ENCODE measurements at regions of chr14 and their contacts with region 1.

Region 1: DNA sequence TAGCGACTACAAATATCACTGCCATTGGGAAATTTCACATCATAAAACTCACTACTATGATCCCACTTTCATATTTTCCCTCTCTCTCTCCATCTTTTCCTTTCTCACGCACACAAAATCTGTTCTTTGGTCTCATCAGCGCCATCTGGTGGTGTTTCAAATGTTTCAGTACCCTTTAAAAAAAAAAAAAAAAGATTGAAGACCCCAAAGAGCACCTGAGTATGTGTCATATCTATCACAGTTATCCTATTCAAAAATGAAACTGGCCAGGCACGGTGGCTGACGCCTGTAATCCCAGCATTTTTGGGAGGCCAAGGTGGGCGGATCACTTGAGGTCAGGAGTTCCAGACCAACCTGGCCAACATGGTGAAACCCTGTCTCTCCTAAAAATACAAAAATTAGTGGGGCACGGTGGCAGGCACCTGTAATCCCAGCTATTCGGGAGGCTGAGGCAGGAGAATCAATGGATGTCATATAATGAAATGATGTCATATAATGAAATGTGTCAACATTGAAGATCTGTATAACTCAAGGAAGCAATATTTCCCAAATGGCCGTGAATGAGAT is 72.4 kb downstream of the TTC9 start:
- DNase-seq: peak; percentile 44
- ATAC-seq: peak; percentile 18
- H3K4me3 Mint-ChIP-seq: no peak overlapping the region
- H3K27ac Mint-ChIP-seq: no peak overlapping the region
- H3K4me1 Mint-ChIP-seq: peaks cover 47% of the 10 kb centered on the region
- H3K27me3 Mint-ChIP-seq: no peaks in the 10 kb centered on the region
- CTCF ChIP-seq: peak; percentile 38

Region 2: GRCh38 chr14:70616646-70617045 is 97.5 kb before region 1 on chr14:
- CTCF ChIA-PET with region 1: interaction called, 16 read pairs
- POLR2A ChIA-PET with region 1: no interaction called
- DNase-seq: no peak
- ATAC-seq: no peak
- H3K4me3 Mint-ChIP-seq: no peak overlapping the region
- H3K27ac Mint-ChIP-seq: no peak overlapping the region
- H3K4me1 Mint-ChIP-seq: no peaks in the 10 kb centered on the region
- H3K27me3 Mint-ChIP-seq: no peaks in the 10 kb centered on the region
- CTCF ChIP-seq: no peak

Region 3: DNA sequence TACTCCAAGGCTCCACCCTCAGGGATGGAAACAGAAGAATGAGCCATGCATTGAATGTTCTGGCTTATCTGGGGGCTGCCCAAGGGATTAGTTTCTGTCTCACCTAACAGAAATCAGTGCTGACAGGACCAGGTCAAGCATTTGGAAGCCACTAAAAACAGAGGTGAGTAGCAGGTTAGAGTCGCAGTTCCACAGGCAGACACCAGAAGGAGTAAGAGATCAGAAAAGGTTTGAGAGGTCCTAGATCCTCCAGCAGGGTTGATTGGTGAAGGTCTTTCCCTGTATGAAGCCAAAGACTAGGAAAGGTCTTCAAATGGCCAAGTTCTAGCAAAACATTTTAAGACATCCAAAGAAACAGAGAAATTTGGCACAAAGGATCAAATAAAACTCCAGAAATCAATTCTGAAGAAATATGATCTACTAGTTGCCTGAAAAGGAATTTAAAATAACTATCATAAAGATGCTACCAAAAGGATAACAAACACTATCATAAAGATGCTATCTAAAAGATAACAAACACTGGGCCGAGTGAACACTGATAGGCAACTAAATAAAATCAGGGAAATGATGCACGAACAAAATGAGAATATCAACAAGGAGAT is 91.9 kb before region 1 on chr14:
- CTCF ChIA-PET with region 1: interaction called, 16 read pairs
- POLR2A ChIA-PET with region 1: no interaction called
- DNase-seq: peak; percentile 66
- ATAC-seq: peak; percentile 100
- H3K4me3 Mint-ChIP-seq: no peak overlapping the region
- H3K27ac Mint-ChIP-seq: no peak overlapping the region
- H3K4me1 Mint-ChIP-seq: no peaks in the 10 kb centered on the region
- H3K27me3 Mint-ChIP-seq: no peaks in the 10 kb centered on the region
- CTCF ChIP-seq: peak; percentile 46; the same call in 1 of the 2 replicates

Region 4: DNA sequence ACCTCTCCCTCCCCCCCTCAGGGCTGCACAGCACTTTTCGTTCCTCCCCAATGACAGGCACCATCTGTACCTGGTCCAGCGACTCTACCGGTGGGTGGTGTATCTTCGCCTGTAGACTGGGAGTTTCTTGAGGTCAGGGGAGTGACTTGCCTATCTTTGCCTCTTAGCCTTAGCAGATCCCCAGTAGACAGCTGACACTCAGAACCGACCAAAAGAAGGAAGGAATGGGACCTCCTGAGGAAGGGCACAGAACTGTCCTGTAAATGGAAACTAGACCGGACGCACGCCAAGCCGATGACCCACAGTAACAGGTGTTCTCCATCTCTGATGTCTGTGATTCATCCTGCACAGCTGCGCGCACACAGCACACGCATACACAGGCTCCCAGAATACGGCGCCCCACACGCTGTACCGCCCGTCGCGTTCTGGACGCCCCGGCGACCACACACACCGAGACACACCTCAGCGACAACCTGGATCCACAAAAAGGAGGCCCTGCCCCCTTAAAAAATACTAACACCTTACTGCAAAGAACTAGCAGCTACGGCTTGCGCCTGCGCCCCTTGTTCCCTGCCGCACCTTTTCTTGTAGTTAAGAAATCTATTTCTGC is 73.1 kb before region 1 on chr14:
- CTCF ChIA-PET with region 1: interaction called, 18 read pairs
- POLR2A ChIA-PET with region 1: interaction called, 5 read pairs
- DNase-seq: no peak
- ATAC-seq: peak; percentile 47
- H3K4me3 Mint-ChIP-seq: peak overlapping the region; percentile 92
- H3K27ac Mint-ChIP-seq: peak overlapping the region; percentile 80
- H3K4me1 Mint-ChIP-seq: peaks cover 44% of the 10 kb centered on the region
- H3K27me3 Mint-ChIP-seq: no peaks in the 10 kb centered on the region
- CTCF ChIP-seq: no peak

Region 5: GRCh38 chr14:70809543-70810244 is 95.6 kb after region 1 on chr14:
- CTCF ChIA-PET with region 1: interaction called, 12 read pairs
- POLR2A ChIA-PET with region 1: interaction called, 8 read pairs
- DNase-seq: peak; percentile 100
- ATAC-seq: peak; percentile 94
- H3K4me3 Mint-ChIP-seq: no peak overlapping the region
- H3K27ac Mint-ChIP-seq: peak overlapping the region; percentile 96
- H3K4me1 Mint-ChIP-seq: peaks cover 15% of the 10 kb centered on the region
- H3K27me3 Mint-ChIP-seq: no peaks in the 10 kb centered on the region
- CTCF ChIP-seq: no peak

Region 6: DNA sequence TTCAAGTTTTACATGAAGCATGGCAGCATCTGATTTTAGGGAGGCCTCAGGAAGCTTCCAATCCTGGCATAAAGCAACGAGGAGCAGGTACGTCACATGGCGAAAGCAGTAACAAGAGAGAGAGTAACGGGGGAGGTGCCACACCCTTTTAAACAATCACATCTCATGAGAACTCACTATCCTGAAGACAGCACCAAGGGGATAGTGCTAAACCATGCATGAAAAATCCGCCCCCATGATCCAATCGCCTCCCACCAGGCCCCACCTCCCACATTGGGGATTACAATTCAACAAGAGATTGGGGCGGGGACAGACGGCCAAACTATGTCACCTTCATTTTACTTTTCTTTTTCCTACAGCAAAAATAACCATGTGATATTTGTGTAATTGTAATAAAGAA is 102.4 kb after region 1 on chr14:
- CTCF ChIA-PET with region 1: interaction called, 23 read pairs
- POLR2A ChIA-PET with region 1: interaction called, 3 read pairs
- DNase-seq: no peak
- ATAC-seq: peak; percentile 16; the same call in 1 of the 2 replicates
- H3K4me3 Mint-ChIP-seq: no peak overlapping the region
- H3K27ac Mint-ChIP-seq: no peak overlapping the region
- H3K4me1 Mint-ChIP-seq: peaks cover 16% of the 10 kb centered on the region
- H3K27me3 Mint-ChIP-seq: peaks cover 29% of the 10 kb centered on the region
- CTCF ChIP-seq: no peak